Sigmoid colon (tissue), 7 donors: ENCODE measurements at regions of chr1 and their contacts with region 1.

Region 1: DNA sequence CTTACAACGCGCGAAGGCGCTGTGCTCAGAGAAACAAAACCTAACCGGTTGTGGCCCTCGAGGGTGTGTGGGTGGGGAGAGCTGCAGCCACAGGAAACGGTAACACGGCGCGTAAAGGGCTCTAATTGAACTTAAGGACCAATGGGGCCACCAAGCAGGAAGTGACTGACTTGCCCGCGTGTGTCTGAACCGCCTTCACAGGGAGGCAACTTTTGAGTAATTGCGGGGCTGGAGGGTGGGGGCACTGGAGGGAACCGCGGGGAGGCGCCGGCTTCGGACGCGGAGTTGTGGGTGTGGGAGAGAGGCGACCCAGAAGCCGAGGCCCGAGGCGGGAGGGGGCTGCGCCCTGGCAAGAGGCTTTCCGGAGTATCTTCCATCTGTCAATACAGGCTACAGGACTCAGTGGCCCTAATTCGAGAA is 577 bp upstream of the PNRC2 start:
- DNase-seq: peak; percentile 93
- H3K4me3 ChIP-seq: peak overlapping the region; percentile 47 to 89 (median 78)
- H3K27ac ChIP-seq: peak overlapping the region; percentile 98 to 100 (median 98)
- H3K4me1 ChIP-seq: peaks cover 0 to 39% (median 27%) of the 10 kb centered on the region in 4 donors
- H3K27me3 ChIP-seq: no peaks in the 10 kb centered on the region
- CTCF ChIP-seq: peak in 3 of 4 experiments; percentile 13 to 25 (median 14)
- EP300 ChIP-seq: no peak
- POLR2A ChIP-seq: no peak

Region 2: DNA sequence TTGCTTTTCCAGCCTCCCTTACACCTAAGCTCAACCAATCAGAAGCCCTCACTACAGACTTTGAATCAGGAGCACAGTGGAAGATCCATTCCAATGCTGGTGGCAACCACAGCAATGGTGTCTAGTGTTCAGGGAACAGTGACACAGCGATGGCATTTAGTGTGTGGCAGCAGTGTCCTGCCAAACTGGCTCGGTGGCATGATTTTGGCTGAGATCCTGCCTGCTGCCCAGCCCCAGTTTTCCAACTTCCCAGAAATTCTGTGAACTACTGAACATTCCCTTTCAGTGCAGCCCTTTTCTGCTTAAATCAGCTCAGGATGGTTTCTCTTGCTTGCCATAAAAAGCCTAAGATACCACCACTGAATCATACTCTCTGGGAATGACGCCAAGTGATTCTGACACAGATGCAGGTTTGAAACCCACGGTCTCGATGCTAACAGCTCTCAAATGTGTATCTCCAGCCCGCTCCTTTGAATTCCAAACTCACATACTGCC is 483.9 kb before region 1 on chr1:
- intact Hi-C with region 1: no loop called
- DNase-seq: no peak
- H3K4me3 ChIP-seq: no peak overlapping the region
- H3K27ac ChIP-seq: peak overlapping the region in 2 of 4 donors; percentile 10 to 50
- H3K4me1 ChIP-seq: peaks cover 0 to 26% (median 7%) of the 10 kb centered on the region in 4 donors
- H3K27me3 ChIP-seq: no peaks in the 10 kb centered on the region
- CTCF ChIP-seq: no peak
- EP300 ChIP-seq: no peak
- POLR2A ChIP-seq: no peak

Region 3: DNA sequence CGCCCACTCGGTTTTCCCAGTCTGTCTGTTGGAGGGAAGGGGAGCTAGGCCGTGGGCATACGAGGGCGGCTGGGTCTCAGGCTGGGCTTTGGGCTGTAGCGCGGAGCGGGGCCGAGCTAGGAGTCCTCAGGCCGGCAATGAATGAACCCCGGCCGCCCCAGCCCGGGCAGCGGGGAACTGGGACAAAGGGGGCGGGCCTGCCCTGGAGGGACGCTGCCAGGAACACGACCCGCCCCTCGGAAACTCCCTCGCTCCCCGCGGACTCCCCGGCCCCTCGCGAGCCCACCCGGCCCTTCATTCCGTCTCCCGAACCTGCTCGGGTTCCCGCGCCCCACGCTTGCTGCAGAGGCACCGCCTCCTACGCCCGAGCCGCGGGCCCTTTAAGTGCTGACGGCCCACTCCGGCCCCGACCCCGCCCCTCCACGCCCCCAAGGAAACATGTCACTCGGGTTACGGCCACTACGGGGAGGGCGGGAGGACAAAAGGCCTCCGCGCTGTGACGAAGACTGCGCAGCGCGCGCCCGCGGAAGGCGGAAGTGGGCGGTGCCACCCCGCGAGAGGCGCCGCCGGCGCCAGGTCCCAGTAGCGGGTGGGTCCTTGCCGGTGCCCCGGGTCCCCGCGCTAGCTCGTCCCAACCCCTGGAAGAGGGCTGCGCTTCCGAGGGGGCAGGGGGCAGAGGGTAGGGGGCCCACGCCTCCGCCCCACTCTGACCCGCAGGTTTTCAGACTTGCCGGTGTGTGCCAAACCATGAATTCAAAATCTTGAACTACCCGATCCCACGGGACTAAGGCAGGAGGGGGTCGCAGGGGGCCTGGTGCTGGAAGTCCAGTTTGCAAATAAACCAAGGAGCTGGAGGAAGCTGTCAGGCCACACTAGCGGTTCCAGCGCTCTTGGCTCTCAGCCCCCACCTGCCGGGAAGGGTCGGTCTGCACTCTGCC is 158.4 kb before region 1 on chr1 and contains the start of gene GALE:
- intact Hi-C with region 1: loop called (anchors 5 kb)
- DNase-seq: peak; percentile 98
- H3K4me3 ChIP-seq: peak within 1 kb of the TSS; percentile 69 to 93 (median 76)
- H3K27ac ChIP-seq: peak within 1 kb of the TSS; percentile 86 to 94 (median 90)
- H3K4me1 ChIP-seq: peaks cover 0 to 28% (median 20%) of the 10 kb centered on the region in 4 donors
- H3K27me3 ChIP-seq: no peaks in the 10 kb centered on the region
- CTCF ChIP-seq: no peak
- EP300 ChIP-seq: peak in 1 of 4 donors; percentile 70
- POLR2A ChIP-seq: peak; percentile 62 to 79
- total RNA-seq, gene GALE: 7.8 to 11.5 (median 9.5) TPM

Region 4: GRCh38 chr1:23916209-23917131 is 42.6 kb before region 1 on chr1:
- intact Hi-C with region 1: loop called (anchors 2 kb)
- DNase-seq: peak; percentile 81
- H3K4me3 ChIP-seq: no peak overlapping the region
- H3K27ac ChIP-seq: no peak overlapping the region
- H3K4me1 ChIP-seq: peaks cover 0 to 26% (median 21%) of the 10 kb centered on the region in 4 donors
- H3K27me3 ChIP-seq: no peaks in the 10 kb centered on the region
- CTCF ChIP-seq: peak in 3 of 4 experiments; percentile 20 to 58 (median 52)
- EP300 ChIP-seq: no peak
- POLR2A ChIP-seq: no peak

Region 5: GRCh38 chr1:24009406-24009805 is 50.4 kb after region 1 on chr1:
- intact Hi-C with region 1: no loop called
- DNase-seq: no peak
- H3K4me3 ChIP-seq: no peak overlapping the region
- H3K27ac ChIP-seq: no peak overlapping the region
- H3K4me1 ChIP-seq: no peaks in the 10 kb centered on the region
- H3K27me3 ChIP-seq: no peaks in the 10 kb centered on the region
- CTCF ChIP-seq: no peak
- EP300 ChIP-seq: no peak
- POLR2A ChIP-seq: no peak

Region 6: DNA sequence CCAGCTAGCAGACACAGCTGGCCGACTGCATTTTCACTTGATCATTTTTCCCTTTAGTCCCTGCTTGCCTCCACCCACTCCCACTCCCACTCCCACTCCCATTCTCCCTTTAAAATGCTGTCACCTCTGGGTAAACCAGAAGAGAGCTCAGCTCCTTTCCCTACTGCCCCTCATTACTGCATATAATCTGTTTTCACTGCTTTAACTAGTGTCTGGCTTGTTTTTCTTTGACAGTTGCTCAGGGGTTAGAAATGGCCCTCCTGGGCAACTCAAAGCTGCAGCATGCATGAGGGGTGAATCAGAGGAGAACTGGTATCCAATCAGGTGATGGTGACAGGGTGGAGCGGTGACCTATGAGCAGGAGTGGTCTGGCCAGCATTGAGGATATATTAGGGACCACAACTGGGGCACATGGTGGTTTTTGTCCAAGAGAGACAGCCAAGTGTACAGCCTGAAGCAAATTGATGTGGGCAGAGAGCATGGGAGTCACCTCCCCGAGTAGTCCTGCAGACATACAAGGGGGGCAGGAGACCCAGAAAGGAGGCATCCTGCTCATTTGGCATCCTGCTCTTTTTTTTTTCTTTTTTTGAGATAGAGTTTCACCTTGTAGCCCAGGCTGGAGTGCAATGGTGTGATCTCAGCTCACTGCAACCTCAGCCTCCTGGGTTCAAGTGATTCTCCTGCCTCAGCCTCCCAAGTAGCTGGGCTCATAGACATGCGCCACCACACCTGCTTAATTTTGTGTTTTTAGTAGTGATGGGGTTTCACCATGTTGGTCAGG is 63.7 kb after region 1 on chr1:
- intact Hi-C with region 1: loop called (anchors 2 kb)
- DNase-seq: no peak
- H3K4me3 ChIP-seq: no peak overlapping the region
- H3K27ac ChIP-seq: peak overlapping the region; percentile 80 to 96 (median 88)
- H3K4me1 ChIP-seq: peaks cover 0 to 60% (median 58%) of the 10 kb centered on the region in 4 donors
- H3K27me3 ChIP-seq: no peaks in the 10 kb centered on the region
- CTCF ChIP-seq: no peak
- EP300 ChIP-seq: no peak
- POLR2A ChIP-seq: no peak

Region 7: GRCh38 chr1:24111996-24112779 is 153.1 kb after region 1 on chr1 and contains the start of gene MYOM3:
- intact Hi-C with region 1: loop called (anchors 1 kb)
- DNase-seq: peak; percentile 85
- H3K4me3 ChIP-seq: peak within 1 kb of the TSS in 3 of 4 donors; percentile 7 to 38 (median 32)
- H3K27ac ChIP-seq: peak within 1 kb of the TSS in 1 of 4 donors; percentile 38
- H3K4me1 ChIP-seq: peaks cover 0 to 12% (median 8%) of the 10 kb centered on the region in 4 donors
- H3K27me3 ChIP-seq: peaks cover 0 to 1% (median 0%) of the 10 kb centered on the region in 3 donors
- CTCF ChIP-seq: peak in 3 of 4 experiments; percentile 44 to 60 (median 47)
- EP300 ChIP-seq: no peak
- POLR2A ChIP-seq: no peak
- total RNA-seq, gene MYOM3: under 0.01 TPM in 2 of 4 donors, not detected in the others